ENCODE measurements at regions of chr11 and their contacts with region 1.

Region 1: DNA sequence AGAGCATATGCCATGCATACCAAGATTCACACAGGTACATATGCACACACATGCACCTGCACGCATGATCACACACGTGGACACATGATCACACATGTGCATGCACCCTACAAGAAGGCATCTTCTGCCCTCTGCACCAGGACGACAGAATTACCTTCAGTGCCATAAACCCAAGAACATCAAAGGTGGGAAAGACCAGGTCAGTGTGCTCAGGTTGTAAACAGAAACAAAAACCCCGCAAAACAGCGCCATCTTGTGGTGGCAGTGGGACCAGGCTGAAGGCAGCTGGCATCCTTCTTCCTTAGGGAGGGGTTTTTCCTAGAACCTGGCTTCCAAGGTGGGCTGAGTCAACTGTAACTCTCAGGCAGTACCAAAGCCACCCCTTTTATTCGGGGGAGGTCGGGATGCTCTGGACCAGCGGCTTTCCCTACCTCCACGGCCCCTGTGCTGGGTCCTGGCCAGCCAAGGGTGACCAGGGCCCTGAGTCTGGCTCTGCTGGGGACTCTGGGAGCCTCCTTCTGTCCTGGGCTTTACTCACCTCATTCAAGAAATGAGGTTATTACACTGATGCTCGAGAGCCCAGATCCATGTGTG is 69.4 kb upstream of the FGF3 start:
- DNase-seq: peak; percentile 88
- CTCF ChIP-seq: peak; percentile 90

Region 2: GRCh38 chr11:69718147-69718546 is 170.4 kb before region 1 on chr11:
- in situ Hi-C with region 1: loop called (anchors 25 kb)
- DNase-seq: peak; percentile 83
- CTCF ChIP-seq: peak; percentile 23

Region 3: DNA sequence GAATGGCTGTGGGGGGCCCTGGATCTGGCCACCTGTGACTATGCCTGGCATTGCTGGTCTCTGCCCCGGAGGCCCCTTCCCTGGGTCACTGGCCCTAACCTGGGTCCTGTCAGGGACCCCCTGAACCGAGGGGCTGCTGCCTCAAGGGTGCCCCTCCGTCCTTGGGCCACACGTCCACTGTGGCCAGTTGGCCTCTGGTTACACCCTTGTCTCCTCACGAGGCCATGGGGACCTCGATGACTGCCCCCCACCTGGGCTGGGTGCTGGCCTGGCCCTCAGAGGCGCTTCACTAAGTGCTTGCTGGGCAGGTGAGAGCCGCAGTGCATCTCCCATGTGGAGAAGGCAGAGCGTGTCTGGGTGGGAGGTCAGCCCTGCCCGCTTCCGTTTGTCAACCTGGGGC is 157.5 kb before region 1 on chr11:
- in situ Hi-C with region 1: no loop called
- DNase-seq: no peak
- CTCF ChIP-seq: no peak

Region 4: DNA sequence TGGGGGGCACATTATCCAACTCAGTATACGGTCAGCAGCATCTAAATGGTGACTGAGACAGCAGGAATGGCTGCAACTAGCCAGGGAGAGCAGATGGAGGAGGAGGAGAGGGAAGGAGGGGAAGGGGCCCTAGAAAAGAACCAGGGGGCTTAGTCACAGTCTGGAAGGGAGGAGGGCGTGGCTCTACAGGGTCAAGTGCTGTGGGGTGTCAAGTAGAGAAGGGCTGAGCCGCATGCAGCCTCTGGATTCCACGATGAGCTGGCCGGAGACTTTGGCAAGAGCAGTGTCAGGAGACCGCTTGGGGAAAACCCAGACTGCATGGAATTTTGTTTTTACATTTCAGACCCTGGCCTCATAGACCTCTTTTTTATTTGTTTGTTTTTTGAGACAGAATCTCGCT is 356.1 kb after region 1 on chr11:
- in situ Hi-C with region 1: no loop called
- DNase-seq: no peak
- CTCF ChIP-seq: no peak

Measured in GM13976 (cell line).